ENCODE measurements at regions of chr13 and their contacts with region 1.

Region 1: DNA sequence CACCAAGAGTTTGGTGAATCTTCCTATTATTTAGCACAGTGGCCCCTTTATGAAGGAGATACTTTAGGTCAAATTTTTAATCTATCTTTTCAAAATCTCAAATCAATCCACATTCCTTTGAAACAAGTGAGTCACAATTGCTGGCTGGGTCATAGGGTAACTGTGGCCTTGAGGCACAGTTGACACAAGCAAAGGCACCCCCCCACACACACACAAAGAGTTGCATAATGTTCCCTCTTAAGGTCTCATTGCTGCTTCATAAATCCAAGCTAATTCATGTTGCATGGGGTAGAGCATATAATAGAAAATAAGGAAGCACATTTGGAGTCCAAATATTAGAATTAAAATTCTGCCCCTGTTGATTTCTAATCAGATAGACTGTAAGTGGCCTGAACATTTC is 171.5 kb downstream of the DLEU7 start:
- DNase-seq: no peak
- H3K4me3 Mint-ChIP-seq: no peak overlapping the region
- H3K27ac Mint-ChIP-seq: no peak overlapping the region
- H3K4me1 Mint-ChIP-seq: no peaks in the 10 kb centered on the region
- H3K27me3 Mint-ChIP-seq: peaks cover 9% of the 10 kb centered on the region

Region 2: DNA sequence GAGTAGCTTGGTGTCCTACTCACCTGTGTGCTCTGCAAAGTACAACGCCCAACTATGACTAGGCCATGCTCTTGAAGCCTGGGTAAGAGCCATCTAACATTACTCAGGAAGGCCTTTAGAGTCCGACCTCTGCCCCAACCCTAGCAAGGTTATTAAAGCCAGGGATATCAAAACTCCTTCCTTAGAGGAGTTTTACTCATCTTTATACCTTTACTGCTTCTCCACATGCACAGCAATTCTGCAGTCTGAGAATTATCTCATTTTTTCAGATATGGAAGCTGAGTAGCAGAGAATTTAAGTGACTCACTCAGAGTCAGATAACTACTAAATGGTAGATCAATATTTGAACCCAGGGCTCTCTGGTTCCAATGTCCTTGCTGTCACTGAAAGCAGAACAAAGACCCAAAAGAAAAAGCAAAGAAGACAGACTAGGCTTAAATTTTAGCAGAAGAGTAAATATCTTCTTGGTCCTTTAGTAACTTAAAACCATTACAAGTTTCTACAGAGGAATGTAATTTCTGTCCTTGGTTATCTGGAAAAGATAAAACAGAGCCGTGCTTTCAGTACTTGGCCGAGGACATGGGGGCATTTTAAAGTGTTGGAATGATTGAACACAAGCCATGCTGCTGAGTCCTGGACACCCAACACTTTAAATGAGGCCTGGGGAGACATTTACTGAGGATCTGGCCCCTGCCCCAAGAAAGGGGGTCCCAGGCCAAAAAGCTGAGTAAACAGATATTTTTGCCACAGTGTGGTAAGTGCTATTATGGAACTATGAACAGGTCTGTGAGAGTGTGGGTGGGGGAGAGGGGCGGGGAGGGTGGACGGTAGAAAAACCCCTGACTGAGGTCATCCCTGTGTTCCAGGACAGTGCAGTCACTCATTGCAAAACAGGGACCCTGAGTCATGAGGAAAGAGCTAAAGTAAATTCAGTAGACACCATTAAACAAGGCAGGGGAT is 861.2 kb before region 1 on chr13:
- intact Hi-C with region 1: loop called (anchors 5 kb)
- DNase-seq: no peak
- H3K4me3 Mint-ChIP-seq: no peak overlapping the region
- H3K27ac Mint-ChIP-seq: no peak overlapping the region
- H3K4me1 Mint-ChIP-seq: no peaks in the 10 kb centered on the region
- H3K27me3 Mint-ChIP-seq: peaks cover 16% of the 10 kb centered on the region

Measured in activated CD4-positive, alpha-beta T cell treated with anti-CD3 and anti-CD28 coated beads, Interleukin-2, amount 10 ng/mL, durations not matched to agents 24 days and 14 days (primary cell).